ENCODE measurements at regions of chr10 and their contacts with region 1.

Region 1: GRCh38 chr10:124092860-124093773 is at the start of gene CHST15:
- DNase-seq: peak; percentile 75 to 80
- H3K4me3 ChIP-seq: peak within 1 kb of the TSS; percentile 45
- H3K4me3 Mint-ChIP-seq: peak within 1 kb of the TSS; percentile 71
- H3K27ac Mint-ChIP-seq: peak within 1 kb of the TSS; percentile 59
- H3K4me1 ChIP-seq: peaks cover 3% of the 10 kb centered on the region; the same call in 1 of the 2 replicates
- H3K4me1 Mint-ChIP-seq: peaks cover 6% of the 10 kb centered on the region
- H3K27me3 ChIP-seq: no peaks in the 10 kb centered on the region
- H3K27me3 Mint-ChIP-seq: no peaks in the 10 kb centered on the region
- CTCF ChIP-seq: peak in 1 of 2 experiments; percentile 15
- total RNA-seq, gene CHST15: 26.1 and 26.7 TPM in 2 replicates

Region 2: GRCh38 chr10:123994417-123995081 is 98.6 kb before region 1 on chr10:
- CTCF ChIA-PET with region 1: interaction called, 3 read pairs
- POLR2A ChIA-PET with region 1: no interaction called
- intact Hi-C with region 1: loop called (anchors 5 kb)
- DNase-seq: peak; percentile 89 to 95
- H3K4me3 ChIP-seq: peak overlapping the region; percentile 5; the same call in 1 of the 2 replicates
- H3K4me3 Mint-ChIP-seq: peak overlapping the region; percentile 67
- H3K27ac Mint-ChIP-seq: no peak overlapping the region
- H3K4me1 ChIP-seq: peaks cover 9% of the 10 kb centered on the region; the same call in 1 of the 2 replicates
- H3K4me1 Mint-ChIP-seq: peaks cover 13% of the 10 kb centered on the region
- H3K27me3 ChIP-seq: no peaks in the 10 kb centered on the region
- H3K27me3 Mint-ChIP-seq: peaks cover 10% of the 10 kb centered on the region
- CTCF ChIP-seq: peak; percentile 96 to 97

Region 3: DNA sequence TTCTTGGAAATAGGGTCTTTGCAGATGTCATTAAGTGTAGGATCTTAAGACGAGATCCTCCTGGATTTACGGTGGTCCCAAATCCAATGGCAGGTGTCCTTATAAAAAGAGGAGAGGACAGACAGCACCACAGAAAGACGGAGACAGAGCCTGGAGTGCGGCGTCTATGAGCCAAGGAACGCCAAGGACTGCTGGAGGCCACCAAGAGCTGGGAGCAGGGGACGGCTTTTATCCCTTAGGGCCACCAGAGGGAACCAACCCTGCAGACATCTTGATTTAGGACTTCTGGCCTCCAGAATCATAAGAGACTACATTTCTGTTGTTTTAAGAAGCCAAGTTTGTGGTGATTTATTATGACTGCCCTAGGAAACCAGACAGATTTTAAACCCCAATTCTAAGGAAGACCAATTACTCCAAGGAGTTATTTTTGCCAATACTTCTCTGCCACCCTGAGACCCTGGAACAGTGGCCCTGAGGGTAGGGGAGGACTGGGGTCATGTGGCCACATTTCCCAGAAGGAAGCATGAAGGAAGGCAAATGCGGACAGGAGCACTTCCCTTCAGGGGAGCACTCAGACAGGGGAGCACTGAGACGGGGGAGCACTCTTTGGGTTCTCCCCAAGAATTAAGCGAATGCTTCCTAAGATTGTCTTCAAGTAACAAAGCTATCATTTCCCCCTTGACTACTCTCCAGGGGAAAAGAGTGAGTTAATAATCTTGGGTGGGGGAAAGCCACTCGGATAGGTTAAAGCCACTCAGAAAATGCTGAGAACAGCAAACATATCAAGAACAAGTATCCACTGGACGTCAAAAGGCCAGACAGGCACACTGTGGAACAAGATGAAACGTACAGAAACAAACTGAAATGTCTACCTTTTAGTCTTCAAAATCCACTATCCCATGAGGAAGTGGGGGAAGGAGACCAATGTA is 67.2 kb before region 1 on chr10:
- CTCF ChIA-PET with region 1: interaction called, 3 read pairs
- POLR2A ChIA-PET with region 1: no interaction called
- intact Hi-C with region 1: loop called (anchors 1 kb)
- DNase-seq: peak in 1 of 2 experiments; percentile 39
- H3K4me3 ChIP-seq: no peak overlapping the region
- H3K4me3 Mint-ChIP-seq: no peak overlapping the region
- H3K27ac Mint-ChIP-seq: no peak overlapping the region
- H3K4me1 ChIP-seq: no peaks in the 10 kb centered on the region
- H3K4me1 Mint-ChIP-seq: no peaks in the 10 kb centered on the region
- H3K27me3 ChIP-seq: no peaks in the 10 kb centered on the region
- H3K27me3 Mint-ChIP-seq: peaks cover 2% of the 10 kb centered on the region
- CTCF ChIP-seq: peak; percentile 29 to 71

Region 4: DNA sequence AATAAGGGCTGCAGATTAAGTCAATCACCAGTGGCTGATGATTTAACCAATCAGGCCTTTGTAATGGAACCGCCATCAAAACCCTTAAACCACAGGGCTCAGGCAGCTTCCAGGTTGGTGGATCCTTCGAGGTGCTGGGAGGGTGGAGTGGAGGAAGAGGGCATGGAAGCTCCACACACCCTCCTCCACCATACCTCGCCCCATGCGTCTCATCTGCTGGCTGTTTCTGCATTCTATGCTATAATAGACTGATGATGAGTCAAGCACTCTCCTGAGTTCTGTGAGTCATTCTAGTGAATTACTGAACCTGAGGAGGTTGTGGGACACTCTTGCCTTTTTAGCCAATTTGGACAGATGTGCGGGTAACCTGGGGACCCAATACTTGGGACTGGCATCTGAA is 43.6 kb before region 1 on chr10:
- CTCF ChIA-PET with region 1: interaction called, 4 read pairs
- POLR2A ChIA-PET with region 1: interaction called, 9 read pairs
- intact Hi-C with region 1: loop called (anchors 2 kb)
- DNase-seq: no peak
- H3K4me3 ChIP-seq: no peak overlapping the region
- H3K4me3 Mint-ChIP-seq: no peak overlapping the region
- H3K27ac Mint-ChIP-seq: peak overlapping the region; percentile 19
- H3K4me1 ChIP-seq: peaks cover 20% of the 10 kb centered on the region; the same call in 1 of the 2 replicates
- H3K4me1 Mint-ChIP-seq: no peaks in the 10 kb centered on the region
- H3K27me3 ChIP-seq: no peaks in the 10 kb centered on the region
- H3K27me3 Mint-ChIP-seq: no peaks in the 10 kb centered on the region
- CTCF ChIP-seq: no peak

Region 5: GRCh38 chr10:124063750-124064603 is 29.1 kb before region 1 on chr10:
- CTCF ChIA-PET with region 1: interaction called, 4 read pairs
- POLR2A ChIA-PET with region 1: interaction called, 4 read pairs
- intact Hi-C with region 1: loop called (anchors 2 kb)
- DNase-seq: peak in 1 of 2 experiments; percentile 31
- H3K4me3 ChIP-seq: no peak overlapping the region
- H3K4me3 Mint-ChIP-seq: no peak overlapping the region
- H3K27ac Mint-ChIP-seq: peak overlapping the region; percentile 62
- H3K4me1 ChIP-seq: peaks cover 40% of the 10 kb centered on the region
- H3K4me1 Mint-ChIP-seq: peaks cover 29% of the 10 kb centered on the region
- H3K27me3 ChIP-seq: no peaks in the 10 kb centered on the region
- H3K27me3 Mint-ChIP-seq: no peaks in the 10 kb centered on the region
- CTCF ChIP-seq: no peak